CD4-positive, alpha-beta memory T cell (primary cell): ENCODE measurements at regions of chr3 and their contacts with region 1.

Region 1: GRCh38 chr3:130892759-130893375 is 1.0 kb upstream of the ATP2C1 start:
- DNase-seq: peak; percentile 75 to 80 (median 76)
- H3K4me3 ChIP-seq: peak overlapping the region; percentile 79 to 99
- H3K4me3 Mint-ChIP-seq: peak overlapping the region; percentile 95 to 99 (median 98)
- H3K27ac ChIP-seq: peak overlapping the region; percentile 99
- H3K27ac Mint-ChIP-seq: peak overlapping the region; percentile 99 to 100 (median 100)
- H3K4me1 ChIP-seq: peaks cover 29% of the 10 kb centered on the region
- H3K4me1 Mint-ChIP-seq: peaks cover 27 to 47% (median 32%) of the 10 kb centered on the region in 4 donors
- H3K27me3 ChIP-seq: no peaks in the 10 kb centered on the region
- H3K27me3 Mint-ChIP-seq: peaks cover 0 to 1% of the 10 kb centered on the region in 2 donors

Region 2: GRCh38 chr3:130746246-130747039 is 146.4 kb before region 1 on chr3 and contains the start of gene PIK3R4:
- CTCF ChIA-PET with region 1: interaction called, 29 read pairs
- POLR2A ChIA-PET with region 1: interaction called, 29 read pairs
- intact Hi-C with region 1: loop called (anchors 1 kb)
- DNase-seq: peak; percentile 93 to 99 (median 95)
- H3K4me3 ChIP-seq: peak within 1 kb of the TSS; percentile 99 to 100
- H3K4me3 Mint-ChIP-seq: peak within 1 kb of the TSS; percentile 90 to 95 (median 92)
- H3K27ac ChIP-seq: peak within 1 kb of the TSS; percentile 91
- H3K27ac Mint-ChIP-seq: peak within 1 kb of the TSS in 6 of 7 donors; percentile 97 to 99 (median 98)
- H3K4me1 ChIP-seq: peaks cover 47% of the 10 kb centered on the region
- H3K4me1 Mint-ChIP-seq: peaks cover 33 to 59% (median 49%) of the 10 kb centered on the region in 4 donors
- H3K27me3 ChIP-seq: no peaks in the 10 kb centered on the region
- H3K27me3 Mint-ChIP-seq: peaks cover 0 to 3% of the 10 kb centered on the region in 2 donors
- total RNA-seq, gene PIK3R4: 29.1 to 33.2 TPM

Region 3: GRCh38 chr3:130906374-130906995 is 13.6 kb after region 1 on chr3:
- CTCF ChIA-PET with region 1: no interaction called
- POLR2A ChIA-PET with region 1: interaction called, 3 read pairs
- intact Hi-C with region 1: loop called (anchors 1 kb)
- DNase-seq: peak in 1 of 5 donors; percentile 36
- H3K4me3 ChIP-seq: no peak overlapping the region
- H3K4me3 Mint-ChIP-seq: peak overlapping the region in 4 of 8 donors; percentile 16 to 45 (median 26)
- H3K27ac ChIP-seq: no peak overlapping the region
- H3K27ac Mint-ChIP-seq: peak overlapping the region in 3 of 7 donors; percentile 7 to 34 (median 14)
- H3K4me1 ChIP-seq: peaks cover 45% of the 10 kb centered on the region
- H3K4me1 Mint-ChIP-seq: peaks cover 48 to 63% (median 51%) of the 10 kb centered on the region in 4 donors
- H3K27me3 ChIP-seq: no peaks in the 10 kb centered on the region
- H3K27me3 Mint-ChIP-seq: no peaks in the 10 kb centered on the region

Region 4: DNA sequence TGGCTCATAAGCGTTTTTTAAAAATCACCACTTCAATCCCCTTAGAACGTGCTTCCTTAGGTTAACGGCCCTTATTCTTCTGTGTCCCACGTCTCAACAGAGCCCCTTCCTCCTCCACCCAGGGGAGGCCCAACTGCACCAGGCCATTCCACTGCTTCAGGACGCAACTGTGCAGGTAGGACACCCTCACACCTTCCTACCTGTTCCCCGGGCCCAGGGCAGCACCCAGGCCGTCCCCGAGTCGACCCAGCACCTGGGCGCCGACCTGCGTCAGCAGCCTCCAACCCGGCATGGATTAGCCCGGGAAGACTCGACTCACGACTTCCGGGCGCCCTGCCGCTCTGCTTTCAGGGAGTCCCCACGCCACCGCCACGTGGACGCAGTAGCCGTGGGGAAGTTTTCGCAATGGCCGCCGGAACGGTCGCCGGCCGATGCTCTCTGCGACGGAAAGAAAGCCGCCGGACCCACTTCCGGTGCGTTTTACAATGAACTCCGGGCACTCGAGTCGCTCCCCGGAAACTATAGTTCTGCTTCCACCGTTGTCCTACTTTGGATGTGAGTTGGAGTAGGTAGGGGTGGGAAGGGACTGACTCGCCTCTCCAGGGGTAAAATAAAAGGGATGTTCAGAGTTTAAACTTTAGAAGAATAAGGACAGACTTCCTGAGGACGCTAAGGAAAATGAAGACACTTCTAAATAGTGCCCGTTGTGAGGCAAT is 609.8 kb after region 1 on chr3 and contains the start of gene MRPL3:
- CTCF ChIA-PET with region 1: interaction called, 3 read pairs
- POLR2A ChIA-PET with region 1: interaction called, 3 read pairs
- intact Hi-C with region 1: loop called (anchors 1 kb)
- DNase-seq: peak; percentile 79 to 85 (median 81)
- H3K4me3 ChIP-seq: peak within 1 kb of the TSS; percentile 74 to 98
- H3K4me3 Mint-ChIP-seq: peak within 1 kb of the TSS; percentile 91 to 100 (median 98)
- H3K27ac ChIP-seq: peak within 1 kb of the TSS; percentile 75
- H3K27ac Mint-ChIP-seq: peak within 1 kb of the TSS; percentile 92 to 97 (median 95)
- H3K4me1 ChIP-seq: peaks cover 27% of the 10 kb centered on the region
- H3K4me1 Mint-ChIP-seq: peaks cover 25 to 47% (median 38%) of the 10 kb centered on the region in 4 donors
- H3K27me3 ChIP-seq: no peaks in the 10 kb centered on the region
- H3K27me3 Mint-ChIP-seq: no peaks in the 10 kb centered on the region
- total RNA-seq, gene MRPL3: 45.8 to 48.1 TPM

Region 5: DNA sequence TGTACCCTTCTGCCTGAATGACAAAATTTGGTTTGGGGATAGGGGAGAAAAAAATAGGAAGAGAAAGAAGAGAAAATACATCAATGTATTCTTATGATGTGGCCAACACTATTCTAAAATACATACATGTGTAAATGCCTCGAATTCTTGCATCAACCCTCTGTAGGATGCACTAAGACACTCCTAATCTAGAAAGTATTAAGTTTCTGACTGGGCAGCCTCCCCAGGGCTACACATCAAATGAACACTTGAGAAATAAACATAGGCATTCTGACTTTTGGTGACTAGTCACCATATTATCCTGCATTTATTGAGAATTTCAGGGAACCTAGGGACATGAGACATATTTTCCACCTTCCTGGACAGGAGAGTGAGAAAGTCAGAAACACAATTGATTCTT is 1032.7 kb after region 1 on chr3:
- CTCF ChIA-PET with region 1: no interaction called
- POLR2A ChIA-PET with region 1: no interaction called
- intact Hi-C with region 1: no loop called
- DNase-seq: no peak
- H3K4me3 ChIP-seq: no peak overlapping the region
- H3K4me3 Mint-ChIP-seq: no peak overlapping the region
- H3K27ac ChIP-seq: no peak overlapping the region
- H3K27ac Mint-ChIP-seq: no peak overlapping the region
- H3K4me1 ChIP-seq: no peaks in the 10 kb centered on the region
- H3K4me1 Mint-ChIP-seq: no peaks in the 10 kb centered on the region
- H3K27me3 ChIP-seq: no peaks in the 10 kb centered on the region
- H3K27me3 Mint-ChIP-seq: peaks cover 0 to 5% of the 10 kb centered on the region in 2 donors